ENCODE measurements at regions of chrX and their contacts with region 1.

Region 1: GRCh38 chrX:40735325-40736169 is at the start of gene MED14:
- DNase-seq: peak; percentile 79 to 93
- H3K4me3 ChIP-seq: peak within 1 kb of the TSS; percentile 77 to 96
- H3K27ac ChIP-seq: peak within 1 kb of the TSS; percentile 84 to 94
- H3K4me1 ChIP-seq: no peaks in the 10 kb centered on the region
- H3K27me3 ChIP-seq: no peaks in the 10 kb centered on the region
- CTCF ChIP-seq: peak; percentile 37 to 52 (median 46)
- total RNA-seq, gene MED14: 10.5 TPM

Region 2: DNA sequence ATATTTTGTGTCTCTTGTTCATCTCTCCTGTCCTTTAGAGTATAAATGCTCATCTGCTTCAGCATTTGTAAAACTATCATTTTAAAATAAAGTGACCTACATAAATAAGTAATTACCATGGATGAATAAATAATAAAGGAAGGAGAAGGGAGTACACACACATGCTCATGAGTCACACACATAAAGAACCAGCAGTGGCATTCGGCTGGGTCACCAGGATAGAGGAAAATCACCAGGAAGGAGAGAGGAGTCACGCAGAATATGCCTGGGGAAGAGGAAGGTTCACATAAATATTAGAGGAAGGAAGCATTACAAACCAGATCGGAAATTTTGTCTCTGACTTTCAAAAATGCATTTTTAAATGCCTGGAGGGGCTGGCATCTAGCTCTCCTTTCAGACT is 38.3 kb after region 1 on chrX:
- intact Hi-C with region 1: loop called (anchors 5 kb)
- DNase-seq: no peak
- H3K4me3 ChIP-seq: no peak overlapping the region
- H3K27ac ChIP-seq: peak overlapping the region in 1 of 2 donors; percentile 16
- H3K4me1 ChIP-seq: no peaks in the 10 kb centered on the region
- H3K27me3 ChIP-seq: no peaks in the 10 kb centered on the region
- CTCF ChIP-seq: no peak

Region 3: GRCh38 chrX:40792433-40792832 is 56.9 kb after region 1 on chrX:
- intact Hi-C with region 1: loop called (anchors 5 kb)
- DNase-seq: no peak
- H3K4me3 ChIP-seq: no peak overlapping the region
- H3K27ac ChIP-seq: no peak overlapping the region
- H3K4me1 ChIP-seq: no peaks in the 10 kb centered on the region
- H3K27me3 ChIP-seq: no peaks in the 10 kb centered on the region
- CTCF ChIP-seq: no peak

Region 4: GRCh38 chrX:40845331-40845911 is 109.9 kb after region 1 on chrX:
- intact Hi-C with region 1: no loop called
- DNase-seq: no peak
- H3K4me3 ChIP-seq: no peak overlapping the region
- H3K27ac ChIP-seq: no peak overlapping the region
- H3K4me1 ChIP-seq: no peaks in the 10 kb centered on the region
- H3K27me3 ChIP-seq: no peaks in the 10 kb centered on the region
- CTCF ChIP-seq: no peak